ENCODE measurements at regions of chr1 and their contacts with region 1.

Region 1: GRCh38 chr1:201481761-201482493 is 12.9 kb upstream of the PHLDA3 start:
- DNase-seq: peak; percentile 88 to 96
- H3K4me3 ChIP-seq: peak overlapping the region; percentile 31 to 65 (median 38); a peak in 7 of 8 replicates
- H3K27ac ChIP-seq: no peak overlapping the region
- H3K4me1 ChIP-seq: peaks cover 0 to 5% (median 2%) of the 10 kb centered on the region in 4 experiments; a peak in 4 of 7 replicates
- H3K27me3 ChIP-seq: peaks cover 0 to 12% (median 7%) of the 10 kb centered on the region in 4 experiments; a peak in 6 of 7 replicates
- CTCF ChIP-seq: peak; percentile 94 to 98 (median 95)
- EP300 ChIP-seq: peak in 1 of 2 experiments; percentile 3; a peak in 1 of 3 replicates
- POLR2A ChIP-seq: no peak
- RAD21 ChIP-seq: peak; percentile 96 to 97

Region 2: DNA sequence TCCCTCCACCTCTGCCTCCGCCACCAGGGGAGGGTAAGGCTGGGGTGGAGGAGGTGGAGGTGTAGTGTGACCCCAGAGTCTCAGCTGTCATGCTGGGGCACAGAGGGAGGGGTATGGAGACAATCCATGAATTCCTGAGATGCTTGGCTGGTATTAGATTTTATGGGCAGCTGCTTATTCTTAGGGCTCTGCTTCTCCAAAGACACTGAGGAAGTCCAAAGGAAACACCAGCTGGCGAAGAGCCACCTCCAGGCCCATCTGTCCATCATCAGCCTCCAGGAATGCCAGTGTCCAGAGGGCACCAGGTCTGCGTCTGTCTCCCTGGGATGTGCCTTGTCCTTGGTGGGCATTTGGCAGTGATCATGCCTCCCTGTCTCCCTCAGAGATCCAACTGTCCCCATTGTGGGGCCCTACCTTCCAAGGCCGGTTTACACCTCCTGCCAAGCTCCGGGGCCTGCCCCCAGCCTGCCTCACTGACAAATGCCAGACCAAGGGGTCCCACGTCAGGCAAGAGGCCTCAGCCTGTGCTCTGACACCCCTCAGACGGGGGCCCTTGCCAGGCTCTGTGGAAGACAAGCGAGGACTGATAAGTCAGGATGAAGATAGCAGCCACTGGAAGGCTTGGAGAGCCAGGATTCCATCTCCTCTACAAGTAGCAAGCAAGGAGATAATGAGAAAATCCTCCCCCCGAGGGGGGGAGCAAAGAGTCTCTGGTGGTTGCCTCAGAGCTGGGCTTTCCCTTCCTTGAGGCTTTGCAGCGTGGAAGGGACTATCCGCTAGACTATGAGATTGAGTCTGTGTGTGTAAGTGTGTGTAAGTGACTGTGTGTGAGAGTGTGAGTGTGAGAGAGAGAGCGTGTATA is 62.0 kb before region 1 on chr1:
- CTCF ChIA-PET with region 1: no interaction called
- POLR2A ChIA-PET with region 1: no interaction called
- DNase-seq: no peak
- H3K4me3 ChIP-seq: no peak overlapping the region
- H3K27ac ChIP-seq: no peak overlapping the region
- H3K4me1 ChIP-seq: peaks cover 0 to 10% (median 0%) of the 10 kb centered on the region in 4 experiments; a peak in 1 of 7 replicates
- H3K27me3 ChIP-seq: 0 out of 7 replicates have a peak, but pooled peaks cover 0 to 2% (median 0%) of the 10 kb centered on the region in 4 experiments
- CTCF ChIP-seq: no peak
- EP300 ChIP-seq: no peak
- POLR2A ChIP-seq: no peak
- RAD21 ChIP-seq: no peak

Region 3: GRCh38 chr1:201436393-201436792 is 45.5 kb before region 1 on chr1:
- CTCF ChIA-PET with region 1: interaction called, 171 read pairs
- POLR2A ChIA-PET with region 1: interaction called, 8 read pairs
- DNase-seq: peak in 1 of 2 experiments; percentile 63
- H3K4me3 ChIP-seq: no peak overlapping the region
- H3K27ac ChIP-seq: no peak overlapping the region
- H3K4me1 ChIP-seq: peaks cover 0 to 7% (median 3%) of the 10 kb centered on the region in 4 experiments; a peak in 3 of 7 replicates
- H3K27me3 ChIP-seq: no peaks in the 10 kb centered on the region
- CTCF ChIP-seq: peak; percentile 39 to 55 (median 49); a peak in 3 of 4 replicates
- EP300 ChIP-seq: no peak
- POLR2A ChIP-seq: no peak
- RAD21 ChIP-seq: peak; percentile 29 to 54

Region 4: GRCh38 chr1:201468844-201469511 is 12.9 kb before region 1 on chr1 and contains the start of gene PHLDA3:
- CTCF ChIA-PET with region 1: interaction called, 96 read pairs
- POLR2A ChIA-PET with region 1: interaction called, 10 read pairs
- DNase-seq: peak; percentile 77 to 82
- H3K4me3 ChIP-seq: peak within 1 kb of the TSS; percentile 64 to 75 (median 69)
- H3K27ac ChIP-seq: no peak within 1 kb of the TSS; the same call in 1 of the 2 replicates
- H3K4me1 ChIP-seq: peaks cover 0 to 19% (median 11%) of the 10 kb centered on the region in 4 experiments; a peak in 6 of 7 replicates
- H3K27me3 ChIP-seq: peaks cover 5 to 35% (median 31%) of the 10 kb centered on the region in 4 experiments
- CTCF ChIP-seq: no peak
- EP300 ChIP-seq: no peak
- POLR2A ChIP-seq: no peak; a peak in 1 of 3 replicates
- RAD21 ChIP-seq: no peak
- total RNA-seq, gene PHLDA3: 27.5 and 27.7 TPM in 2 replicates

Region 5: GRCh38 chr1:201511941-201512539 is 30.1 kb after region 1 on chr1:
- CTCF ChIA-PET with region 1: interaction called, 445 read pairs
- POLR2A ChIA-PET with region 1: interaction called, 30 read pairs
- DNase-seq: no peak
- H3K4me3 ChIP-seq: no peak overlapping the region
- H3K27ac ChIP-seq: no peak overlapping the region
- H3K4me1 ChIP-seq: peaks cover 3 to 5% (median 5%) of the 10 kb centered on the region in 4 experiments; a peak in 6 of 7 replicates
- H3K27me3 ChIP-seq: peaks cover under 1 to 18% (median 12%) of the 10 kb centered on the region in 4 experiments
- CTCF ChIP-seq: no peak
- EP300 ChIP-seq: no peak
- POLR2A ChIP-seq: no peak
- RAD21 ChIP-seq: no peak

Region 6: GRCh38 chr1:201545851-201546492 is 64.0 kb after region 1 on chr1:
- CTCF ChIA-PET with region 1: interaction called, 21 read pairs
- POLR2A ChIA-PET with region 1: no interaction called
- DNase-seq: no peak
- H3K4me3 ChIP-seq: no peak overlapping the region
- H3K27ac ChIP-seq: no peak overlapping the region
- H3K4me1 ChIP-seq: peaks cover 0 to 2% (median 2%) of the 10 kb centered on the region in 4 experiments; a peak in 3 of 7 replicates
- H3K27me3 ChIP-seq: peaks cover 0 to 8% (median 5%) of the 10 kb centered on the region in 4 experiments; a peak in 6 of 7 replicates
- CTCF ChIP-seq: peak; percentile 37 to 48 (median 46)
- EP300 ChIP-seq: no peak
- POLR2A ChIP-seq: no peak
- RAD21 ChIP-seq: peak in 1 of 2 experiments; percentile 26; a peak in 2 of 4 replicates

Region 7: GRCh38 chr1:201703621-201704439 is 221.9 kb after region 1 on chr1:
- CTCF ChIA-PET with region 1: interaction called, 12 read pairs
- POLR2A ChIA-PET with region 1: no interaction called
- DNase-seq: peak; percentile 65 to 94
- H3K4me3 ChIP-seq: no peak overlapping the region
- H3K27ac ChIP-seq: no peak overlapping the region
- H3K4me1 ChIP-seq: peaks cover 2 to 9% (median 5%) of the 10 kb centered on the region in 4 experiments; a peak in 5 of 7 replicates
- H3K27me3 ChIP-seq: no peaks in the 10 kb centered on the region
- CTCF ChIP-seq: peak; percentile 87 to 99 (median 98)
- EP300 ChIP-seq: no peak
- POLR2A ChIP-seq: no peak
- RAD21 ChIP-seq: peak; percentile 99 to 100

Region 8: DNA sequence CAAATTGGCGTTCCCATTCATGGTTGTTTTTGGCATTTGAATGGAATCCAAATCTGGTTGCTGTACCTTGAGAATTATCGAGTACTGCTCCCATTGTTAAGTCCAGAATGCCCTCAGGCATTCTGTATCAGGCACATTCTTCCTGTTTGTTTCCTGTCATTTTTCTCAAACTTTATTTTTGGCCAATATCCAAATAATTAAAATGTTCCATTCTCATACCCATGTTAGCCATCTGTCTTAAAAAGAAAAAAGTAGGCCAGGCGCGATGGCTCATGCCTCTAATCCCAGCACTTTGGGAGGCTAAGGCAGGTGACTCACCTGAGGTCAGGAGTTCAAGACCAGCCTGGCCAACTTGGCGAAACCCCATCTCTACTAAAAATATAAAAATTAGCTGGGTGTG is 377.5 kb after region 1 on chr1:
- CTCF ChIA-PET with region 1: no interaction called
- POLR2A ChIA-PET with region 1: no interaction called
- DNase-seq: no peak
- H3K4me3 ChIP-seq: no peak overlapping the region
- H3K27ac ChIP-seq: no peak overlapping the region
- H3K4me1 ChIP-seq: no peaks in the 10 kb centered on the region
- H3K27me3 ChIP-seq: no peaks in the 10 kb centered on the region; a peak in 1 of 7 replicates
- CTCF ChIP-seq: no peak
- EP300 ChIP-seq: no peak
- POLR2A ChIP-seq: no peak
- RAD21 ChIP-seq: no peak

Region 9: GRCh38 chr1:202023033-202023486 is 541.1 kb after region 1 on chr1:
- CTCF ChIA-PET with region 1: no interaction called
- POLR2A ChIA-PET with region 1: no interaction called
- DNase-seq: no peak
- H3K4me3 ChIP-seq: no peak overlapping the region
- H3K27ac ChIP-seq: no peak overlapping the region
- H3K4me1 ChIP-seq: peaks cover 0 to 10% (median 2%) of the 10 kb centered on the region in 4 experiments; a peak in 5 of 7 replicates
- H3K27me3 ChIP-seq: no peaks in the 10 kb centered on the region
- CTCF ChIP-seq: no peak
- EP300 ChIP-seq: no peak
- POLR2A ChIP-seq: no peak
- RAD21 ChIP-seq: no peak